ENCODE measurements at regions of chr18 and their contacts with region 1.

Region 1: DNA sequence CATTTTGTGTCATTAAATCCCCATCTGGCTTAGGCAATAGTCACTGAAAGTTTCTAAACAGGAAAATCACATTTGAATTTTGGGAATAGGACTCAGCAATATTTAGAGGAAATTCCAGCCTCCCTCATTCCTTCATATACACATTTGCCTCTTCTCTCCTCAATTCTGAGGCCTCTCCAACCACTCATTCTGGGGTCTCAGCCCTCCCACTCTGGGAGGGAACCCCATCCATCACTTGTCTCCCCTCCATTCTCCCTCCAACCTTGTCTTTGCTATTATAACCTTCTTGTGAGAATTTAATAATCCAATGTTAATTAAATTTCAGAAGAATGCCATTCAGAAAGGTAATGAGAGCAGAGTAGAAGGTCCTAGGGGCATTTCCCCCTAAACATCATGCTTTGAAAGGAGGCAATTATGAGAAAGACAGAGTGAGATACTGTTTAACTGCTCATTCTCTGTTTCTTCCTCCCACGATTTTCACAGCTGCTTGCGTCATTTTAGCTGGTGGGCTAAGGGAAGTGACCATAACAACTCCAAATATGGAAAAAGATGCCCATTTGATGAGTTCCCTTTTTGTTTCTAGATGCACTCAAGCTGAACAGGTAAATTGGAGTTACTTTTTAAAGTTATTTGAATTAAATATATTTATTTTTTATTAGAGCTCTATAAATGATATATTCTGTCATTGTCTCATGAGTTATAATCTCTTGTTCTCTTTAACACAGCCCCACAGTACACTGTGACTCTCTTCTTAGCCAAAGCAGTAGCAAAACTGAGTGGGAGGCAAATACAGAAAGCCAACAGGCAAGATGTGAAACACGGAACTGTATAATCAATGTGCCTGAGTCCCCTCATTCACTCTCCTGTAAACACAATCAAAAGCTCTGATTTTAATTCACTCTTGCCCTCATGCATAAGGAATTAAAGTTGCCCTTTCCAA is 135.1 kb downstream of the DLGAP1 start:
- DNase-seq: no peak
- ATAC-seq: no peak

Region 2: DNA sequence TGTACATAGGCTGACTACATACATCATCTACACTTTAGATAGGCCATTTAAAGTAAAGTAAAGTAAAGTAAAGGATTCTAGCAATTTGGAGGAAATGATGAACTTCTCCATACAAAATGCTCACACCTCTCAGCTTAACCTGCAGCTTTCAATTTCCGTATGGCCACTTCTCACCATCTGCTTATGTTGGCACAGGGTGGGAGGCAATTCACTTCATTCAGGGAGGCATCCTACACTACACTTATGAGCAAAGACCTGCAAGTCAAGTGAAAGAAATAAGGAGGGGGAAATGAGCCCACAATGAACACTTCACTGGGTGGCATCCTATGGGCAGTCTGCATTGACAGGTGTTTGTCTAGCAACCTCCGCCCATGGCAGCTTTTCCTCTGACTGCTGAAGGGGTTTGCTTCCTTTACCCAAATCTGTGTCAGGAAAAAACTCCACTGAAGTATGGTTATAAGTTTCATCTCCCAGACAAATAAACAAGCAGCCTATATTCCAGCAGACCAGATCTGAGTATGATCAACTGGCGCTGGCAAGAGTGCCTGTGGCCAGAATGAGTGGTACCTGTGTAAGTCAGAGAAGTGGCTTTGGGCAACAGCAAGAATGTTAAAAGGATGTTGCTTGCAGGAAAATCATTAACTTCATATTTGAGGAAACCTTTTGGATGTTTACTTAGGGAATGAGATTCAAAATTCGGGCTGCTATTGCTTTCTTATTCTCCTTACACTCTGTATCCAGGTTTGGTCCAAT is 421.0 kb before region 1 on chr18:
- intact Hi-C with region 1: loop called (anchors 5 kb)
- DNase-seq: no peak
- ATAC-seq: no peak

Region 3: DNA sequence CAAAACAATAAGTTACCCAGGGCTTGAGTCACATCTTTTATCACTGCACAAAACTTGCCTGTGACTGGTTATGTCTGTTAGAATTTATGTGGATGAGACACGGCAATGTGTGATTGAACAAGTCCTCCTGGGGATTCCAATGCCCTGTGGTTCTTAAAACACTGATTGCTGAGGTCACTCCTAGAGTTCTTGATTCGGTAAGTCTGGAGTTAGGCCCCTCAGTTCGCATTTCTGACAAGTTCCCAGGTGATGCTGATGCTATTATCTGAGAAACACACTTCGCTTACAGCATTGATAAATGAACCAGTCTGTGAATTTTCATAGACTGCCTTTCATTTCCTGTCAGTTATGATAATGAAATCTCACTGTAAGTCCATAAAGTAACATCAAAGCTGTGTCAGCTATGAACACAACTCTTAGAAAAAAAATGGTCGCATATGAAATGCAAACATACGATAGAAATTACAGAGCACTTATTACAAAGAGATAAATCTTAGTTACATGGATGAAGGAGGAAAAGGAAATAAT is 78.9 kb before region 1 on chr18:
- intact Hi-C with region 1: loop called (anchors 2 kb)
- DNase-seq: no peak
- ATAC-seq: no peak

Measured in sciatic nerve (tissue), 2 donors.